ENCODE measurements at regions of chr14 and their contacts with region 1.

Region 1: DNA sequence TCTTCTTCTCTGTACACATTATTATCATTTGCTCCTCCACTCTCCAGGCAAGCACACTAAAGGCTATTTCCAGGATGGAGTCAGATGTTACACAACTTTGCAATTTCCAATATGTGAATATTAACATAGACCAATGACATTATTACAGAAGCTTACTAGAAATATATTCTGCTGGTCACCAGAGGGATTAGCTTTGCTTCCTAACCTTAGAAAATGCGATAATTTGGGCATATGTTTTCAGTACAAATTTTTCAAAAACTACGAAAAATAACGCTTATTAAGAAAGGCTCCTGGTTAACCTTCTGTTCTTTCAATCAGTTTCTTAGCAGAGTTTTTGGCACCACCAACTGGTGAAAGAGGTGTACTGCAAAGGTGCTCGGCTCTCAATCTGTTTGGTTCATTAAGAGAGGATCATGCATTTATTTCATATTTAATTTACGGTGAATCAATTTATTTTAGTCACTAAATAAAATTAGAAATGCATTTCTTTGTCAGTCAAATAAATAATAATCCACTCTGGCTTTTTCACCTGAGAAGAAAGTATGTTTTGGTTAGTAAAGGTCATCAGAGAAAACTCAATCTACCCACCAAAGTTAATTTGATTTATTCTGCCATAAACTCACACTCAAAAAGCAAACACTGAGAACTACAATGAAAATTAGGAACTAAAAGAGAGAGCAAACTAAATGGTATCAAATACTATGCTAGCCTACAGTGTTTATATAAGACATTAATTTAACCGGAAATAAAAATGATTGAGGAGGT is 39.2 kb downstream of the EFCAB11 start:
- DNase-seq: peak; percentile 72
- H3K4me3 ChIP-seq: no peak overlapping the region
- H3K27ac ChIP-seq: no peak overlapping the region
- H3K4me1 ChIP-seq: peaks cover 27% of the 10 kb centered on the region
- H3K27me3 ChIP-seq: no peaks in the 10 kb centered on the region
- CTCF ChIP-seq: peak; percentile 91

Region 2: GRCh38 chr14:89040460-89041259 is 874.6 kb before region 1 on chr14:
- CTCF ChIA-PET with region 1: no interaction called
- POLR2A ChIA-PET with region 1: no interaction called
- intact Hi-C with region 1: loop called (anchors 2 kb)
- DNase-seq: peak; percentile 81
- H3K4me3 ChIP-seq: peak overlapping the region; percentile 30
- H3K27ac ChIP-seq: no peak overlapping the region
- H3K4me1 ChIP-seq: no peaks in the 10 kb centered on the region
- H3K27me3 ChIP-seq: peaks cover 12% of the 10 kb centered on the region
- CTCF ChIP-seq: peak; percentile 98

Region 3: DNA sequence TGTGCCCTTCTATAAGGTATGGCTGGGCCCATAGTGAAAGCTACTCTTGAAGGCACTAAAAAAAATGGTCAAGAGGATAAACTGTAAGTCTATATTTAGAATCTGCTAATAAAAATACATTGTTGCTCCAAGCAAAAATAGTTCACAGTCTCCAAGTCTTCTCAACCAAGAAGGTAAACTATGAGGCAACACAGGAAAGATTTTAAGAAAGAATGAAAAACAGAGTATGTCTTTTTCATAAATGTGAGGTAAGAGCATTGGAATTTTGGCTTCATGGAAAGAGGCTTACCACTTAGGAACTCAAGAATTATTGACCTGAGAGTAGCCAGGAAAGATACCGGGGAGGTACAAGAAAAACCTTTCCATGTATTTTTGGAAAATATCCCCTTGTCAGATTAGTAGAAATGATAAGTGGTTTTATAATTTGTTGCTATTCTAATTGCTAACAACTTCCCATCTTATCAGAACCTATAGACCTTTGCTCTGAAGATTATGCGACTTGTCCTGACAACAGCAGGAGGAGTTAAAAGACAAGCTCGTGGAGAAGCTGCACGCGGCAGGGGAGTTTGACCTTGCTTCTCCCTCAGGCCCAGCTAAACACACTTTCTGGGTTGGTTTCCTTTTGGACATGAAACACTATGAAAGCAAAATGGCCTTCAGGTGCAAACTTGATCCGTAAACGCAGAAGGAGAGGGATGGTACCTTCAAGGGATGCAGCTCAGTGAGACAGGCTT is 736.3 kb before region 1 on chr14:
- CTCF ChIA-PET with region 1: no interaction called
- POLR2A ChIA-PET with region 1: no interaction called
- intact Hi-C with region 1: loop called (anchors 2 kb)
- DNase-seq: no peak
- H3K4me3 ChIP-seq: no peak overlapping the region
- H3K27ac ChIP-seq: no peak overlapping the region
- H3K4me1 ChIP-seq: no peaks in the 10 kb centered on the region
- H3K27me3 ChIP-seq: no peaks in the 10 kb centered on the region
- CTCF ChIP-seq: no peak

Region 4: GRCh38 chr14:89240414-89240813 is 674.9 kb before region 1 on chr14:
- CTCF ChIA-PET with region 1: no interaction called
- POLR2A ChIA-PET with region 1: no interaction called
- intact Hi-C with region 1: loop called (anchors 10 kb)
- DNase-seq: no peak
- H3K4me3 ChIP-seq: no peak overlapping the region
- H3K27ac ChIP-seq: no peak overlapping the region
- H3K4me1 ChIP-seq: peaks cover 18% of the 10 kb centered on the region
- H3K27me3 ChIP-seq: no peaks in the 10 kb centered on the region
- CTCF ChIP-seq: no peak

Region 5: DNA sequence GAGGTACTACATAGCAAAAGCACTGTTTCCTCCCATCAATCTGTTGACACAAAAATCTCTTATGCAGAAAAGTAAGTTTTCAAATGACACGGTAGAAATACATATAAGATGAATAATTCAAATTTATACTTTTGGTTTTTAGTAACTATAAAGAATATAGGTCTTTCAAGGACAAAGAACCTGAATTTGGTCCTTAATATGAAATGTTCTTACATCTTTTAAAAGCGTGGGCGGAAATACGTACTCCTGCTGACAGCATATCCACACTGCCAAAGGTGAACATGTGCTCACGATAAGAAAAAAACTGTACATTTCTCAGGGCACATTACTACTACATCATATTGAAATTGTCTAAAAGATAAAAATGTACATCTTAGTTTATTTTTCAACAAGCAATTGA is 625.8 kb before region 1 on chr14:
- CTCF ChIA-PET with region 1: no interaction called
- POLR2A ChIA-PET with region 1: interaction called, 13 read pairs
- intact Hi-C with region 1: no loop called
- DNase-seq: no peak
- H3K4me3 ChIP-seq: no peak overlapping the region
- H3K27ac ChIP-seq: no peak overlapping the region
- H3K4me1 ChIP-seq: no peaks in the 10 kb centered on the region
- H3K27me3 ChIP-seq: no peaks in the 10 kb centered on the region
- CTCF ChIP-seq: no peak

Region 6: DNA sequence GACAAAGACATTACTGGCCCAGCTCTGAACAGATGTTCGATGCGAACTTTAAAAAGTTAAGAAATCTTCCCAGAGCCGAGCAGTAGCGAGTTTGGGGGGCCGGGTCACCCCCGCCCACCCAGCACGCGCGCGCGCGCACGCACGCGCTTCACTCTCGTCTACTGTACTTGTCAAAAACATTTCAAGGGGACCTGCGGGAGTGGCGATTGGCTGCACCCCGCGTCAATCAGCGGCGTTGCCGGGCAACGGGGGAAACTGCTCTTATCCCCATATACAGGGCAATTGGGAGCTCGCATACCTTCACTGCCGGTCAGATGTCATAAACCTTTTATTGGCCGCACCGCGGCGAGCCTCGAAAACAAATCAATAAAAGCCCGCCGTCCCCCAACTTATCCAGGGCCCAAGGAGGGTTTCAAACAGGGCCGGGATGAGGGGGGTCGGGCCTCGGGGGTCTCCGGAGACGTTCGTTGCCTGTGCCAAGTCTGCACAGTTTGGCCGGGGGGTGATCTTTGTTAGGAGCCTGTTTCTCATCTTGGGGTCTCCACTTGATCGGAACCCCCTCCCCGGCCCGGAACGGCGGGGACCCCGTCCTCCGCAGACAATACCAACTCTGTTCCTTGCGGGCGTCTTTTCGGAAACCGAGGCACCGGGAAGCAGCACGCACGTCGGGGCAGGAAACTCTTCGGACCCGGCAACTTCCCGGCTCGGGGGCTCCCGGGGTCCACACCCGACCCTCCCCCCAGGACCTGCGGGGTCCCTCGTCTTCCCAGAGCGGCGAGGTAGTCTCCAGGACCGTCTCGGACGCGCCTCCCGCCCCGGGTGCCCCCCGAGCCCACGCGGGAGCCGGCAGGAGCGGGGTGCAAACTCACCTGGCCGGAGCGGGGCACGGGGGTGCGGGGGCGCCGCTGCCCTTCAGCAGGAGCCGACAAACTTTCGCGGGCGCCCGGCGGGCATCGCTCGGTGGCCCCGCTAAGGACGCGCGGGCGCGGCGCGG is 499.0 kb before region 1 on chr14:
- CTCF ChIA-PET with region 1: no interaction called
- POLR2A ChIA-PET with region 1: no interaction called
- intact Hi-C with region 1: loop called (anchors 10 kb)
- DNase-seq: peak; percentile 97
- H3K4me3 ChIP-seq: peak overlapping the region; percentile 64
- H3K27ac ChIP-seq: peak overlapping the region; percentile 54
- H3K4me1 ChIP-seq: peaks cover 4% of the 10 kb centered on the region
- H3K27me3 ChIP-seq: no peaks in the 10 kb centered on the region
- CTCF ChIP-seq: no peak

Region 7: DNA sequence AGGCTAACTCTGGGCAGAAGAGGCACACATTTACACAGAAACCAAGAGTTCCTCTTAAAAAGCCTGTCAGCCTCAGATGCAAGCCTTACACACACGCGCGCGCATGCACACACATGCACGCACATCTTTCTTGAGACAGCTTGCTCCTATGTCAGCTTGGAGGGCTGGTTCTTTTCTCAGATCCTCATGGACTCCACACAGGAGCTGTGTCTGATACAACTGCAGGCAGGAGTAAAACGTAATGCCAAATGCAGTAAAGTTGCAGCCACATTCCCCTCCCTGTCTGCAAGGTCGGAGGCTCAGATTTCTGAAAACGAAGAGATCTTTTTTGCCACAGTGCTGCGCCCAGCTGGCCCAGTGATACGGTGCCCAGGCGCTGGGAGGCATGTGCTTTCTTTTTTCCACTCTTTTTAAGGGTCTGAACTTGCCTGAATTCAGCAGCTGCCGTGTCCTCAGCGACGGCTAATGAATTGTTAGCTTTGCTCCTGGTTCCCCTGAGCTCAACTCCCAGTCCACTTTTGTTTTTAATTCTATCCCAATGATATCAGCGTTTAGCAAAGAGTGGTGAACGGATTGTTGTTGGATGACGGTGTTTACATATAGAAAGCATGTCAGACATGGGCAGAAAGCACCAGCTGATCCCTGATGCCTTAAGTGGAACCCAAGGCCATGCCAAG is 425.4 kb before region 1 on chr14:
- CTCF ChIA-PET with region 1: no interaction called
- POLR2A ChIA-PET with region 1: no interaction called
- intact Hi-C with region 1: no loop called
- DNase-seq: no peak
- H3K4me3 ChIP-seq: no peak overlapping the region
- H3K27ac ChIP-seq: no peak overlapping the region
- H3K4me1 ChIP-seq: no peaks in the 10 kb centered on the region
- H3K27me3 ChIP-seq: no peaks in the 10 kb centered on the region
- CTCF ChIP-seq: no peak